ENCODE measurements at regions of chr17 and their contacts with region 1.

Region 1: GRCh38 chr17:3865176-3865575 is 19.1 kb upstream of the NCBP3 start:
- DNase-seq: no peak
- H3K4me3 ChIP-seq: no peak overlapping the region
- H3K27ac ChIP-seq: no peak overlapping the region
- H3K4me1 ChIP-seq: no peaks in the 10 kb centered on the region
- CTCF ChIP-seq: no peak

Region 2: DNA sequence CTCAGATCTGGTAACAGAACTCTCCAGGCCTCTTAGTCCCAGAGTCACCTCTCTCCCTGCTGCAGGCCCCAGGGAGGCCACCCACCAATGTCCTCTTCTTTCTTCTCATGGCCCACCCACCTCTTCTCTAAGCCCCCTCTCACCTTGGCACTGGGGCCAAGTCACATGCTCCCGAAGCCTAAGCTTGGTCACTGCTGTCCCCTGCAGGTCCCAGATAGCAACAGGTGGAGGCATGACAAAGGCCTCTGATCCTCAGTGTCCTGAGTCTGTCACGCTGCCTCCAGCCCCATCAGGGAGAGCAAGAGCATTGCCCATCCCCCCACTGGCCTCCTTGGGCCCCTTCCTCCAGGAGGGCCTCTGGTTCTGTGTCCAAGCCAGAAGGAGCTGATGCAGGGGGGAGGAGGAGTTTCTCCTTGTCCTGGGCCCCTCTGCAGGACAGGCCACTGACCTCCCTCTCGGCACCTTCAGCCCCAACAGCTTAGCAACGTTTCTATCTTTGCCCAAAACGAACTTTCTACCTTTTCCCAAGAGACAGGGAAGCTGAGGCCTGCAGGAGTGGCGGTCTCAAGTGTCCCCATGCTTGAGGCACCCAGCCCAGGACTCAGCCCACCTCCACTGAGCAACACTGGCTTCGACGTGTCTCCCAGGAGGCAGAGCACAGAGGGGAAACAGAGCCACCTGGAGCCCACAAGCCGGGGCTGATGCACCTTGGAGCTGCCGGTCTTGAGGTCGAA is 42.5 kb after region 1 on chr17:
- CTCF ChIA-PET with region 1: no interaction called
- POLR2A ChIA-PET with region 1: interaction called, 3 read pairs
- intact Hi-C with region 1: loop called (anchors 1 kb)
- DNase-seq: no peak
- H3K4me3 ChIP-seq: no peak overlapping the region
- H3K27ac ChIP-seq: no peak overlapping the region
- H3K4me1 ChIP-seq: peaks cover 30% of the 10 kb centered on the region
- CTCF ChIP-seq: peak; percentile 59

Region 3: DNA sequence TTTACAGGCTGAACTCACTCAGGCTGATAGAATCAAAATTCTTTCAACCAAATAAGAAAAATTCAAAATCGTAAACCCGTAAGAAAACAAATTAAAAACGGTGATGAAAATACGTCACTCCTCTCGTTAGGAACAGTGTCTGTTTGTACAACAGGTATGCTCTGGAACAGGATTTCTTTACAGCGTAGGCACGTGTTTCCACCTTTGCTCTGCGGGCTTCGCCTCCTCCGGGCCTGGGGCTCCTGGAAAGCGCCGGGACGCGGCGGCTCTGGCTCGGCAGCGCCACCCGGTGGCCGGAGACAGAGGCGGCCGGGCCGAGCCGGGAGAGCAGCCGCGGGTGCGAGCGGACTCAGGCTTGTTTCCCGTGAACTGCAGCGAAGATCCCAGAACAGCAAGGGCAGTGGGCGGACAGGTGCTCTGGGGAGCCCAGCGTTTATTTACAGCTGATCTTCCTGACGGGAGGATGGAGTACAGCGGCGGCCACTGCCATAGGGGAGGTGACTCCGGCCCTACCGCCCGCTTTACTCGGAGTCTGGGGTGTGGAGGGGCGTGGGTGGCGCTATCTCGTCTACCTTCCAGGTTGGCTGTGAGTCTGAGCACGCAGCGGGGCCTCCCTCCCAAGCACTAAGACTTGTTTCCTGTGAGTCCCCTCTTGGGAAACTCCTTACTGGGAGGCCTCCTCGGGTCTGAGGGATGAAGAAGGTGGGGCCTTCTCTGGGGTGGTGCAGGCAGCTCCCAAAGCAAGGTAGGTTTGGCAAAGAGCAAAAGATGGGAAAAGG is 139.5 kb after region 1 on chr17:
- CTCF ChIA-PET with region 1: no interaction called
- POLR2A ChIA-PET with region 1: no interaction called
- intact Hi-C with region 1: loop called (anchors 1 kb)
- DNase-seq: peak; percentile 72
- H3K4me3 ChIP-seq: no peak overlapping the region
- H3K27ac ChIP-seq: no peak overlapping the region
- H3K4me1 ChIP-seq: peaks cover 13% of the 10 kb centered on the region
- CTCF ChIP-seq: peak; percentile 96

Region 4: DNA sequence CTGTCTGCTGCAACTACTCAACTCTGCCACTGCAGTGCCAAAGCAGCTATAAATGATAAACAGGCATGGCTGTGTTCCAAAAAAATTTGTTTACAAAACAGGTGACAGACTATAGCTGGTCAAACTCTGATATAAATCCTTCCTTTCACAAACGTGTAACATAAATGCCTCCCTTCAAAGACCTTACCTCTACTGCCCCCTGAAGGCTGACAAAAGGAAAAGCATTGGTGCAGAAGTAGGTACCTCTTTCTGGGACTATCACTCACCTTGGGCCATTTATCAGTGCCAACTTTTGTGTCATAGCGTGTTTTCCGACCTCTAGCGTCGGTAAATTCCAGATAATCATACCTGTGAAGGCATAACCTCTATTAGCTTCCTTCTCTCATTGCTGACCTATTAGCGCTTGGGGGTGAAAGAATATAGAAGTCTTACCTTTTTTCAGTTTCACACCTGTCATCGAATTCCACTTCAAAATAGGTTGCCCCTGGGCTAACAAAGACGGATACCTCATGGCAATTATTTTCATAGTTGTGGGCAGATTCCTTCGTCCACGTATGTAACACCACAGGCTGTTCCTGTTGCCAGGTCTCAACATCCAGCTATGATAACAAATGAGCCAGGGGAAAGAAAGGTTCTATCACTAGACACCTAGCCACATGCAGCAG is 209.8 kb after region 1 on chr17:
- CTCF ChIA-PET with region 1: no interaction called
- POLR2A ChIA-PET with region 1: no interaction called
- intact Hi-C with region 1: loop called (anchors 1 kb)
- DNase-seq: peak; percentile 62
- H3K4me3 ChIP-seq: no peak overlapping the region
- H3K27ac ChIP-seq: no peak overlapping the region
- H3K4me1 ChIP-seq: peaks cover 12% of the 10 kb centered on the region
- CTCF ChIP-seq: peak; percentile 89